Vagina (tissue), 2 donors: ENCODE measurements at regions of chr1 and their contacts with region 1.

Region 1: DNA sequence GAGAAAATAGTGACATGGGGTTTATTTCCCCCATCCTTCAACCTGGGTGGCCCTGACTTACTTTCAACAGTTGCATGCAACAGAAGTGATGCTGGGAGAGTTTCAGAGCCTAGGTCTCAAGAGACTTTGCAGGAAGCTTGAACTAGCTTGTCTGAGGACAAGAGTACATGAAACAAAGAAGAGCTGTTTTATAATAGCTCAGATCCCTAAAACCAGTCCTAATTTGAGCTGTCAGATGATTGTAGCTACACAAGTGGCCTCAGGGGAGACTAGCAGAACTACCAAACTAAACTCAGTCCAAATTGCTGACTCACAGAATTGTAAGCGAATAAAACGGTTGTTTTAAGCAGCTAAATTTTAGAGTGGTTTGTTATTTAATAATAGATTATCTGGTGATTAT is 17.1 kb downstream of the RC3H1 start:
- DNase-seq: no peak
- H3K4me3 ChIP-seq: no peak overlapping the region
- H3K27ac ChIP-seq: no peak overlapping the region
- H3K4me1 ChIP-seq: peaks cover 83% of the 10 kb centered on the region
- H3K27me3 ChIP-seq: no peaks in the 10 kb centered on the region
- CTCF ChIP-seq: no peak
- POLR2A ChIP-seq: no peak

Region 2: GRCh38 chr1:175081983-175082382 is 1077.0 kb after region 1 on chr1:
- intact Hi-C with region 1: loop called (anchors 5 kb)
- DNase-seq: no peak
- H3K4me3 ChIP-seq: no peak overlapping the region
- H3K27ac ChIP-seq: no peak overlapping the region
- H3K4me1 ChIP-seq: no peaks in the 10 kb centered on the region
- H3K27me3 ChIP-seq: no peaks in the 10 kb centered on the region
- CTCF ChIP-seq: no peak
- POLR2A ChIP-seq: no peak